Left cardiac atrium (tissue), 4 donors: ENCODE measurements at regions of chr12 and their contacts with region 1.

Region 1: GRCh38 chr12:56450241-56450640 is 1.0 kb upstream of the TIMELESS start:
- DNase-seq: no peak
- ATAC-seq: no peak

Region 2: GRCh38 chr12:56333679-56334489 is 116.4 kb before region 1 on chr12 and contains the start of gene PAN2:
- intact Hi-C with region 1: loop called in 1 of 2 experiments (anchors 10 kb)
- DNase-seq: peak; percentile 97
- ATAC-seq: peak; percentile 99 to 100
- total RNA-seq, gene PAN2: 38.5 to 39.4 TPM

Region 3: DNA sequence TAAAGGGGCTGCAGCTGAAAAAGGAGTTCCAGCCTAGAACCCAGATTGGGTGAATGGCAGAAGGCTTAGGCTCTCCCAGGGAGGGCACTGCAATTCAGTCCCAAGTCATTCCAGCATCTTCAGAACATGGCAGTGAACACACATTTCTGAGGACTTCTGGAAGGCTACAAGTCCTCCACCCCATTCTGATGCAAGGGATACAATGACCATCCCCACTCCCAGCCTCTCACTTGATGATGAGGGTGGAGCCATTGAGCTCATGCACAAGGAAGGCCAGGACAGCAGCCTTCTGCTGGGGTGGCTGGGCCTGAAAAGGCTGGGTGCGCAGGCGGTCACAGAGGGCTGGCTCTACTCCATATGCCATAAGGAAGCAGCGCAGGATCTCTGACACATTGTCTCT is 154.1 kb after region 1 on chr12:
- intact Hi-C with region 1: no loop called
- DNase-seq: no peak
- ATAC-seq: no peak